ENCODE measurements at regions of chr7 and their contacts with region 1.

Region 1: GRCh38 chr7:124072603-124073309 is 39.9 kb upstream of the TMEM229A start:
- DNase-seq: peak; percentile 90
- ATAC-seq: peak; percentile 88
- H3K4me3 ChIP-seq: no peak overlapping the region
- H3K27ac ChIP-seq: peak overlapping the region; percentile 62; the same call in 1 of the 2 replicates
- H3K4me1 ChIP-seq: peaks cover 6% of the 10 kb centered on the region
- H3K27me3 ChIP-seq: peaks cover 2% of the 10 kb centered on the region; the same call in 1 of the 2 replicates
- CTCF ChIP-seq: no peak
- POLR2A ChIP-seq: no peak
- RAD21 ChIP-seq: no peak

Region 2: GRCh38 chr7:123797673-123798527 is 274.9 kb before region 1 on chr7:
- CTCF ChIA-PET with region 1: no interaction called
- POLR2A ChIA-PET with region 1: no interaction called
- dilution Hi-C with region 1: no loop called
- in situ Hi-C with region 1: no loop called
- intact Hi-C with region 1: loop called (anchors 10 kb)
- DNase-seq: peak; percentile 78
- ATAC-seq: peak; percentile 77
- H3K4me3 ChIP-seq: no peak overlapping the region
- H3K27ac ChIP-seq: no peak overlapping the region
- H3K4me1 ChIP-seq: peaks cover 2% of the 10 kb centered on the region; the same call in 1 of the 2 replicates
- H3K27me3 ChIP-seq: 0 out of 2 replicates have a peak, but pooled peaks cover under 1% of the 10 kb centered on the region
- CTCF ChIP-seq: peak; percentile 61
- POLR2A ChIP-seq: no peak
- RAD21 ChIP-seq: peak; percentile 61

Region 3: GRCh38 chr7:123995617-123996326 is 77.0 kb before region 1 on chr7:
- CTCF ChIA-PET with region 1: no interaction called
- POLR2A ChIA-PET with region 1: no interaction called
- dilution Hi-C with region 1: no loop called
- in situ Hi-C with region 1: no loop called
- intact Hi-C with region 1: no loop called
- DNase-seq: no peak
- ATAC-seq: no peak
- H3K4me3 ChIP-seq: no peak overlapping the region
- H3K27ac ChIP-seq: no peak overlapping the region
- H3K4me1 ChIP-seq: no peaks in the 10 kb centered on the region
- H3K27me3 ChIP-seq: no peaks in the 10 kb centered on the region
- CTCF ChIP-seq: no peak
- POLR2A ChIP-seq: no peak
- RAD21 ChIP-seq: no peak

Region 4: DNA sequence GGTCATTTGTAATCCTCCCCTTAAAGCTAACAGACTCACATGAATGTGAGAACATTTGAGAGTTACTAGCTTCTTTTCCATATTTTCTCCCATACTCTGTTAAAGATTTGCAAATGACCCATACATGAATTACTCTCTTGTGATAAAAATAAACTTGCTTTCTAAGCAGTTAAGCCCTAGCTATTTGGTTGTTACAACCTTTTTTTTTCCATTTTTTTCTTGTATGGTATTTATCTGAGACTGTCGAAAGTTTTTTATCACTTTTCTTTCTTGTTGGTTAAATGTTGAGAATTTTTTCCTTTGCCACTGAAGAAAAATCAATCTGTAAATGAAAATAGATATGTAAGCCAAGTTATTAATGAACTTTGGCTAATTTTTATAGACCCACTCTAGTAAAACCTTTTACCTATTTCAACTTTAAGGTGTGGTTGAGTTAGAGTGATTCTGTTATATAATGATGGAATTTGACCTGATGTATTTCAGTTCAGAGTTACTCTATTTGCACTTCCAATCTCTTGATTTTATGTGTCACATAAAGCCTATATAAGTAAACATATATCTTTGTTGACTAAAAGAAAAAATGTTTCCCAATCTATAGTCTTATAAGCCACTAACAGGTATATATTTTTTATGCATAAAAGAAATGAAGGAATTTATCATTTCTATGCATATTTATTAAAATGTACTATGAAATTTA is 20.9 kb before region 1 on chr7:
- CTCF ChIA-PET with region 1: no interaction called
- POLR2A ChIA-PET with region 1: no interaction called
- dilution Hi-C with region 1: no loop called
- in situ Hi-C with region 1: no loop called
- intact Hi-C with region 1: loop called (anchors 2 kb)
- DNase-seq: no peak
- ATAC-seq: no peak
- H3K4me3 ChIP-seq: no peak overlapping the region
- H3K27ac ChIP-seq: no peak overlapping the region
- H3K4me1 ChIP-seq: no peaks in the 10 kb centered on the region
- H3K27me3 ChIP-seq: no peaks in the 10 kb centered on the region
- CTCF ChIP-seq: no peak
- POLR2A ChIP-seq: no peak
- RAD21 ChIP-seq: no peak

Region 5: DNA sequence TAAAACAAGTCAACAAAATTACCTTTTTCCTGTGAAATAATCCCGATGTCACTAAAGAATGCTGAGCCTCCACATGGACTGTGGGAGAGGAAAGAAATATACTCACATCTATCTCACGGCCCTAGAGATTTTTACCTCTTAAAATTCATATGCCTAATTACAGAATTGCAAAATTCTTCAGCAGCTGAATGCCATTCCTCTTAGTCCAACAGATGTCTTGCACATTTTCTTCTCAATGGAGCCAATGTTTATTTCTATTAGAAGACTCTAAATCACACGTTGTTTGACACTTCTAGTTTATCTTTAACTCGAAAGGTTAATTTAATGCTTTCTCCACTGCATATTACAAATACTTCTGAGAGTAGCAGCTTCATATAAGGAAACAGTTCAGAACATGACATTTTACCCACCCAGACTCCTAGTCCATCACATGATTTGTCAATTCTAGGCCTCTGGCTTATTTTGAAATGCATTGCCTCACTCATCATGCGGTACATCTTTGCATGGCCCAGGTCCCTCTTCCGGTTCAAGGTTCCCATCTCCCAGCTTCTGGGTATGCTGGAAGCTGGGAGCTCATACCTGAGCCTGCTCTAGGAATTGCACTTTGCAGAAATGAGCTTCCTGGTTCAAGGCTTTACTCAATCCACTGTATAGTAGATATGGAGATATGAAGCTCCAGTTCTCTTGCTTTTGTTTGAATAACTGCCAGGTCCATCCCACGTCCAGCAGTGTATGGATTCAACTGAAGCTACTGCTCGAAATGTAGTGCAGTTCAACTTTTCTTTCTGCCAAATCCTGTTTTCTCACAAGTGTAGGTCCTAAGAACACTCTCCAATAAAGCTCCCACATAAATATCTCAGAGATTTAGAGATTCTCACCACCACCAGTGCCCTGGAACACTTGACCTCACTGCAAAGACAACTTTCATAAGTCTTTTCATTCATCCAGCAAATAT is 386.6 kb after region 1 on chr7:
- CTCF ChIA-PET with region 1: no interaction called
- POLR2A ChIA-PET with region 1: no interaction called
- dilution Hi-C with region 1: no loop called
- in situ Hi-C with region 1: no loop called
- intact Hi-C with region 1: loop called (anchors 10 kb)
- DNase-seq: peak; percentile 87
- ATAC-seq: peak; percentile 76
- H3K4me3 ChIP-seq: no peak overlapping the region
- H3K27ac ChIP-seq: peak overlapping the region; percentile 86
- H3K4me1 ChIP-seq: peaks cover 13% of the 10 kb centered on the region
- H3K27me3 ChIP-seq: no peaks in the 10 kb centered on the region
- CTCF ChIP-seq: no peak
- POLR2A ChIP-seq: no peak
- RAD21 ChIP-seq: no peak

Measured in IMR-90 (cell line).